GM23248 (cell line): ENCODE measurements at regions of chr3 and their contacts with region 1.

Region 1: DNA sequence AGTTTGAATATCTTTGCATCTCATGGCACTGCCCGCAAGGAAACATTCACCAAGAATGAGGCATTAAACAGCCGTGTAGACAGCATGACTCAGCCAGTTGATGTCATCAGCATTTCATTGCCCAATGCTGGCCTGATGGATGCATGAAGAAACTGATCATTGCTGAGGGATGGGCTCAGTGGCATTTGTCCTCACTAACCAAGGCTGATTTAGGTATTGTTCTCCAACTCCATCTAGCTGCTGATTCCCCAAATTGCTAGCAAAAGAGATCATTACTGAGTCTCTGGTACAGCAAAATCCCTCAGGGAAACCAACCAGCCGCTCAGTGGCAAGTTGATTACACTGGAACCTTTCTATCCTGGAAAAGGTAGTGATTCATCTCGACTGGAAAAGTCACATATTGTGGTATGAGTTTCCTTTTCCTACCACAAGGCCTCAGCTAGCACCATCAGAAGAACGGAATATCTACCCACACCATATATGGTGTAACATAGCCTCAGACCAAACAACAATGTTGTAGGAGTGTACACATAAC is 186.5 kb upstream of the GAP43 start:
- DNase-seq: peak; percentile 97
- H3K4me3 ChIP-seq: no peak overlapping the region
- H3K27ac ChIP-seq: peak overlapping the region; percentile 86
- H3K4me1 ChIP-seq: peaks cover 17% of the 10 kb centered on the region
- H3K27me3 ChIP-seq: no peaks in the 10 kb centered on the region

Region 2: DNA sequence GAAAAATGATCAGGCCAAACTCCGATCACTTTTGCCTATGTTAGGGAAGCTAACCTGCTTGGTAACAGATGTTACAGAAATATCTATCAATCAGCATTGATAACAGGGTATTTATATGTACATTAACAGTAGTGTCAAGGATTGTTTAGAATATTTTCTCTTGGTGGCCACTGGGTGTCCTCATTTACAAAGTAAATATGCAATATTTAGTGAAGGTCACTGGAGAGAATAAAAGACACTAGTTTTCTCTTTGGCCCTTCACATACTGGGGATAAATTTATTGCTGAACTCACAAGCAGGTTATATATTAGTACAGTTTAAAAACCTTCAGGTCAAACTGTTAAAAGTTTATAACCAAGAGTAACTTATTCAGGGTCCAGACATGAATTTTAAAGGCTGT is 1074.0 kb before region 1 on chr3:
- in situ Hi-C with region 1: loop called (anchors 25 kb)
- DNase-seq: peak; percentile 68
- H3K4me3 ChIP-seq: peak overlapping the region; percentile 6; the same call in 1 of the 2 replicates
- H3K27ac ChIP-seq: peak overlapping the region; percentile 74
- H3K4me1 ChIP-seq: peaks cover 27% of the 10 kb centered on the region
- H3K27me3 ChIP-seq: no peaks in the 10 kb centered on the region

Region 3: DNA sequence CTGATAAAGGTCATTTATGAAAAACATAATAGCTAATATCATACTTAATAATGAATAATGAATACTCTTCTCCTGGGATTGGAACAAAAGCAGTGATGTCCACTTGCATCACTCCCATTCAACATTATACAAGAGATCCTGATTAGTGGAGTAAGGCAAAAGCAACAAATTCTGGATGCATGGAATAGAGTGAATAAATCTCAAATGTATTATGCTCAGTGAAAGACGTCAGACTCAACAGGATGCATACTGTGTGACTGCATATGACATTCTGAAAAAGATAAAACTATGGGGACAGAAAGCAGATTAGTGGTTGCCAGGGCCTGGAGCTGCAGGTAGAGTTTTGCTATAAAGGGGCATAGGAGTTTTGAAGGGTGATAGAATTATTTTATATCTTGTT is 212.1 kb before region 1 on chr3:
- in situ Hi-C with region 1: loop called (anchors 5 kb)
- DNase-seq: no peak
- H3K4me3 ChIP-seq: no peak overlapping the region
- H3K27ac ChIP-seq: no peak overlapping the region
- H3K4me1 ChIP-seq: peaks cover 24% of the 10 kb centered on the region
- H3K27me3 ChIP-seq: no peaks in the 10 kb centered on the region